Activated naive CD4-positive, alpha-beta T cell treated with anti-CD3 and anti-CD28 coated beads, Interleukin-2, amount 10 ng/mL, durations not matched to agents 7 days and 5 days (primary cell): ENCODE measurements at regions of chr2 and their contacts with region 1.

Region 1: DNA sequence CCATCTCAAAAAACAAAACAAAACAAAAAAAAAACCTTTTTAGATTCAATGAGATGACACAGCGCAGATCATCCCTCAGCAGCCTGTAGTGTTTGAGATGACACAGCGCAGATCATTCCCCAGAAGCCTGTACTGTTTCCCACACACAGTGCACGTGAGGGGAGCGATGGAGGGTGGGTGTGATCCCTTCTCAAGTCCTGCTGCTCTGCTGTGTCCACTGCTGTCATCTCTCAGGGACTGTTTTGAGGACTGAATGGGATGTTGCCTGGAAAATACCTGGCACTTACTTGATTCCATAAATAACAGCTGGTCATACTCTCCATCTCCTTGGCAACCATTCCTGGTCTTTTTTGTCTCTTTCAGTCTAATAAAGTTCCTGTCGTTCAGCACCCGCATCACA is 25.7 kb downstream of the TGOLN2 start:
- DNase-seq: no peak
- H3K4me3 Mint-ChIP-seq: no peak overlapping the region
- H3K27ac Mint-ChIP-seq: no peak overlapping the region
- H3K4me1 Mint-ChIP-seq: peaks cover 5% of the 10 kb centered on the region
- H3K27me3 Mint-ChIP-seq: peaks cover 57% of the 10 kb centered on the region

Region 2: DNA sequence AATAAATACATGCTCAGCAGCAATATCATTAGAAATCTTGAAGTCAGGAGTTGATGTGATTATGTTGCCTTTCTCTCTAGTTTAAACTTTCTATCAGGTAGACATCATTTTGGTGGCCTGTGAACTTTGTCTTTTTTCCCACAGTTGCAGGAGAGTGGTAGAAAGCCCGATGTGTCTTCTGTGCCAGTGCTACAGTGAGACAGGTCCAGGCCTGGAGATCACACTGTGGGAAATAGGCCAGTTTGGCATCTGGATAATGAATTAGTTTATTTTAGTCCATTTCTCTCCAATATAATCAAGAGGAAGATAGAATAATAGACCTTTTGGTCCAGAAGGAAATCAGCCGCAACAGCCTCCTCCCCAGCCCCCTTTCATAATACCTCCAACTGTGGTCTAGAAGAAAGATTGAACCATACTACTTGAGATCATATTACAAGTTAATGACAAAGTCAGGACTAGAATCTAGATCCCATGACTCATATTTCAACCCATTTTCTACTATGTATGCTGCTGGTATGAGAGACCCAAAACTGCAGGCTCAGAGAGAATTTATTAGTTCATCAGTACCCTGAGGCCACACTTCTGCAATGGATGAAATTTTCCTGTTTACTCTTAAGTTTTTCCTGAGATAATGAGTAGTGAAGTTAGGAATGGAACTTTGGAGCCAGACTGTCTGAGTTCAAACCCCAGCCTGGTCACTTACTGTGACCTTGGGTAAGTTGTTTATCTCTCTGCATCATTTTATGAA is 310.5 kb before region 1 on chr2:
- CTCF ChIA-PET with region 1: no interaction called
- DNase-seq: no peak
- H3K4me3 Mint-ChIP-seq: no peak overlapping the region
- H3K27ac Mint-ChIP-seq: no peak overlapping the region
- H3K4me1 Mint-ChIP-seq: peaks cover 31% of the 10 kb centered on the region
- H3K27me3 Mint-ChIP-seq: no peaks in the 10 kb centered on the region

Region 3: DNA sequence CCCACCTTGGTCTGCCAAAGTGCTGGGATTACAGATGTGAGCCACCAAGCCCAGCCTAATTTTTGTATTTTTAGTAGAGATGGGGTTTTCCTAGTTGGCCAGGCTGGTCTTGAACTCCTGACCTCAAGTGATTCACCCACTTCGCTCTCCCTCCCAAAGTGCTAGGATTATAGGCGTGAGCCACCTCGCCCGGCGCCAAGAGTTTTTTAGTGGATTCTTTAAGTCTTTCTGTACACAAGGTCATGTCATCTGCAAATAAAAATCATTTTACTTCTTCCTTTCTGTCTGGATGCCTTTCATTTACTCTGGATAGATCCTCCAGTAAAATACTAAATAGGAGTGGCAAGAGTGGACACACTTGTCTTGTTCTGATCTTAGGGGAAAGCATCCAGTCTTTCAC is 269.5 kb before region 1 on chr2:
- CTCF ChIA-PET with region 1: no interaction called
- DNase-seq: no peak
- H3K4me3 Mint-ChIP-seq: no peak overlapping the region
- H3K27ac Mint-ChIP-seq: no peak overlapping the region
- H3K4me1 Mint-ChIP-seq: peaks cover 6% of the 10 kb centered on the region
- H3K27me3 Mint-ChIP-seq: no peaks in the 10 kb centered on the region

Region 4: DNA sequence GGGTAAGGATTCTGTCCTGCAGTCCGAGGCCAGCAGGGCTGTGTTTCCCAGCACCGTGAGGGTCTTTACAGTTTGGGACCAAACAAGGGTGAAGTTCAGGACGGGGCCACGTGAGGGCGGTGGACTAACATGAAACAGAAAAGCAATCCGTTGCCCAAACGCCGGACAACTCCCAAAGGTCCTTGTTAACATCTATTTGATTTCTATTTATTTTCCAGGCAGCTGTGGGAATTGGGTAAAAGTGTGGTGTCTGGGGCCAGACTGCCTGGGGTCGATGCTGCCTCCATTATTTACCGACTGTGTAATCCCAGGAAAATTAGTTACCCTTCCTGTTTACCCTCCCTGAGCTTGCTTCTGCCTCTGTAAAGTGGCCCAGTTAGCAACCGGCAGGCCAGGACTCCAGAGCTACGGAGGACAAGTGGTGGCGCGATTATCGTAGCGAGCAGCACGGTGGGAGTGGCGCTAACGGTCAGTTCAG is 235.2 kb before region 1 on chr2:
- CTCF ChIA-PET with region 1: interaction called, 14 read pairs
- DNase-seq: peak; percentile 62
- H3K4me3 Mint-ChIP-seq: no peak overlapping the region
- H3K27ac Mint-ChIP-seq: no peak overlapping the region
- H3K4me1 Mint-ChIP-seq: peaks cover 3% of the 10 kb centered on the region
- H3K27me3 Mint-ChIP-seq: peaks cover 61% of the 10 kb centered on the region

Region 5: GRCh38 chr2:85174943-85175342 is 127.2 kb before region 1 on chr2:
- CTCF ChIA-PET with region 1: no interaction called
- DNase-seq: no peak
- H3K4me3 Mint-ChIP-seq: no peak overlapping the region
- H3K27ac Mint-ChIP-seq: no peak overlapping the region
- H3K4me1 Mint-ChIP-seq: peaks cover 11% of the 10 kb centered on the region
- H3K27me3 Mint-ChIP-seq: peaks cover 20% of the 10 kb centered on the region

Region 6: GRCh38 chr2:85185431-85185940 is 116.6 kb before region 1 on chr2:
- CTCF ChIA-PET with region 1: interaction called, 10 read pairs
- DNase-seq: no peak
- H3K4me3 Mint-ChIP-seq: no peak overlapping the region
- H3K27ac Mint-ChIP-seq: no peak overlapping the region
- H3K4me1 Mint-ChIP-seq: no peaks in the 10 kb centered on the region
- H3K27me3 Mint-ChIP-seq: peaks cover 26% of the 10 kb centered on the region

Region 7: GRCh38 chr2:85266146-85267041 is 35.7 kb before region 1 on chr2:
- CTCF ChIA-PET with region 1: interaction called, 28 read pairs
- DNase-seq: peak; percentile 81
- H3K4me3 Mint-ChIP-seq: no peak overlapping the region
- H3K27ac Mint-ChIP-seq: no peak overlapping the region
- H3K4me1 Mint-ChIP-seq: no peaks in the 10 kb centered on the region
- H3K27me3 Mint-ChIP-seq: peaks cover 39% of the 10 kb centered on the region

Region 8: DNA sequence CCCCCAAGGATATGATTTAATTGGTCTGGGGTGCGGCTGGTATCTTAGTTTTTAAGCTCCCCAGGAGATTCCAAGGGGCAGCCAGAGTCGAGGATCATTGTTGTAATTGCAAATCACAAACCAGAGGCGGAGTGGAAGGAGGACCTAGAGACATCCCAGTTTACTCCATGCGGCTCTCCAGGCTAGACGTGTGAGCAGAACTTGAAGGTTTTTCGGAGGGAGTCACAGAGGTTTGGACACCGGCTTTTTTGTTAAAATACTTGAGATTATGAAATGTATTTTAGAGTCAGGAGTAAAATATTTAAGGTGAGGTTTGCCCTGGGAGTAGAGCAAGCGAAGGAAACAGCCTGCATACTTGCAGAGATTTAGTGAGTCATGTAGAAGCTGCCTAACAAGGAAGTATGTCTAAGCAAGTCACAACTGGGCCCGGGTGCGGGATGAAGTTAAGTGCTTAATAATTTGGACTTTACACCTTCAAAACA is 13.8 kb before region 1 on chr2:
- CTCF ChIA-PET with region 1: interaction called, 42 read pairs
- DNase-seq: no peak
- H3K4me3 Mint-ChIP-seq: no peak overlapping the region
- H3K27ac Mint-ChIP-seq: no peak overlapping the region
- H3K4me1 Mint-ChIP-seq: peaks cover 32% of the 10 kb centered on the region
- H3K27me3 Mint-ChIP-seq: peaks cover 4% of the 10 kb centered on the region

Region 9: DNA sequence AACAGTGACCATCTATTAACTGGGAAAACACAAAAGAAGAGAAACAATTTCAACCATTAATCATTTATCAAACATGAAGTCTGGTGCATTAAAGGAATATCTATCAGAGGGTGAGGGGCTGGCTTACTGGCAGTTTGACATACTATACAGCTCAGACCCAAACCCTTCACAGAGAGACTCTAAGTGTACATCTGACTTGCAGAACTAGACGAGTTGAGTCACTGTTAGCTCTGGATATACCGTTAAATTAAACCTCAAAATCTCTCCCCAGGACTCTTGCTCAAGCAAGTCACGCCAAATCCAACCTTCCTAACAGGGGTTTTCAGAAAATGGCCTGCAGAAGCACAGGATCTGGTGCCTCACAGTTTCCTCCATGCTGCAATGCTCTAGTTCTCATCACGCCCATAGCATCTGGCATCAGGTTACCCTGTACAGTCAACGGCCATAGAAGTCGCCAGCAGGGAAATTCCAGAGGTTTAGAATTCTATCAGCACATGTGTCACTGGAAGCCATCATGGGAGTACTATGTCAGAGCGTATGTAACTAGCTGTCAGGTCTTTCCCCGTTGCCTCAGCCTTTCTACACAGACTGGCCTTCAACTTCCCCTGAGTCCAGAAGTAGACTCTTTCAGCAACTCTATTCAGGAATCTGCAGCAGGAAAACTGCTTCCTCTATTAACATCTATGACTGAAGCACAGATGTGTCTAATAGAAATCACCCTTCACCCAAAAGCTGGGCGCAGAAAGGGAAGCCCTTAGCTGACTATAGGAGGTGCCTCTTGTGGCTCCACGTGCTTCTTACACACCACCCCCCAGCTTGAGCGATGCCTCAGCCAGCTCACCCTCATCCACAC is 16.3 kb after region 1 on chr2:
- CTCF ChIA-PET with region 1: interaction called, 11 read pairs
- DNase-seq: no peak
- H3K4me3 Mint-ChIP-seq: no peak overlapping the region
- H3K27ac Mint-ChIP-seq: no peak overlapping the region
- H3K4me1 Mint-ChIP-seq: peaks cover 57% of the 10 kb centered on the region
- H3K27me3 Mint-ChIP-seq: no peaks in the 10 kb centered on the region

Region 10: GRCh38 chr2:85551698-85552678 is 249.9 kb after region 1 on chr2:
- CTCF ChIA-PET with region 1: interaction called, 10 read pairs
- DNase-seq: peak; percentile 94
- H3K4me3 Mint-ChIP-seq: no peak overlapping the region
- H3K27ac Mint-ChIP-seq: peak overlapping the region; percentile 70
- H3K4me1 Mint-ChIP-seq: peaks cover 6% of the 10 kb centered on the region
- H3K27me3 Mint-ChIP-seq: no peaks in the 10 kb centered on the region